PC-3 (cell line): ENCODE measurements at regions of chr20 and their contacts with region 1.

Region 1: DNA sequence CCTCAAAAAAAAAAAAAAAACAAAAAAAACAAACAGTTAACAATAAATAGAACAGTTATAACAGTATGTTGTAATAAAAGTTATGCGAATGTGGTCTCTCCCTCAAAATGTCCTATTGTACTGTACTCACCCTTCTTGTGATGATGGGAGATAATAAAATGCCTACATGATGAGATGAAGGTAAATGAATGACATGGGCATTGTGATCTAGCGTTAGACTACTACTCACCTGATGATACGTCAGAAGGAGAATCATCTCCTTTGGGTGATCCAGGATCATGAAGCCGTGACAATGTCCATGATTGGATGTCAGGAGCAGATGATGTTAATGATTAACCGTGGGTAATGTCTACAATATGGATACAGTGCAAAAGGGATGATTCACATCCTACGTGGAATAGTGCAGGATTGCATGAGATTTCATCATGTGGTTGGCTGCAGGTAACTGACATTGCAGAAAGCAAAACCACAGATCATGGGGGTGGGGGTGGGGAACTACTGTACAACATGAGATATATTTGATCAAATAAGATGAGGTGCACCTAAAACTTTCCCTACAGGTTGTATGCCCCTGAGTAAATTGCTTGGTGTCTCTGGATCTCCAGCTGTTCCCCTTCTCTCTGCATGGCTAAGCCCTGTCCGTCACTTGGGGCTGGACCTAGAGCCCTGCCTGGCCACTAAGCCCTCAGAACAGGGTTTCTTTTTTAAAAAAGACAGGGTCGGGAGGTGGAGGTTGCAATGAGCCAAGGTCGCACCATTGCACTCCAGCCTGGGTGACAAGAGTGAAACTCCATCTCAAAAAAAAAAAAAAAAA is 6.2 kb upstream of the RBCK1 start:
- DNase-seq: peak; percentile 99
- ATAC-seq: peak; percentile 74
- H3K4me3 ChIP-seq: no peak overlapping the region
- H3K27ac ChIP-seq: peak overlapping the region; percentile 91
- H3K4me1 ChIP-seq: peaks cover 27% of the 10 kb centered on the region
- H3K27me3 ChIP-seq: no peaks in the 10 kb centered on the region
- CTCF ChIP-seq: no peak

Region 2: GRCh38 chr20:362271-363254 is 39.3 kb before region 1 on chr20:
- CTCF ChIA-PET with region 1: no interaction called
- POLR2A ChIA-PET with region 1: interaction called, 3 read pairs
- intact Hi-C with region 1: loop called (anchors 5 kb)
- DNase-seq: peak; percentile 99
- ATAC-seq: peak; percentile 67
- H3K4me3 ChIP-seq: no peak overlapping the region
- H3K27ac ChIP-seq: peak overlapping the region; percentile 86
- H3K4me1 ChIP-seq: peaks cover 52% of the 10 kb centered on the region
- H3K27me3 ChIP-seq: no peaks in the 10 kb centered on the region
- CTCF ChIP-seq: peak; percentile 86

Region 3: DNA sequence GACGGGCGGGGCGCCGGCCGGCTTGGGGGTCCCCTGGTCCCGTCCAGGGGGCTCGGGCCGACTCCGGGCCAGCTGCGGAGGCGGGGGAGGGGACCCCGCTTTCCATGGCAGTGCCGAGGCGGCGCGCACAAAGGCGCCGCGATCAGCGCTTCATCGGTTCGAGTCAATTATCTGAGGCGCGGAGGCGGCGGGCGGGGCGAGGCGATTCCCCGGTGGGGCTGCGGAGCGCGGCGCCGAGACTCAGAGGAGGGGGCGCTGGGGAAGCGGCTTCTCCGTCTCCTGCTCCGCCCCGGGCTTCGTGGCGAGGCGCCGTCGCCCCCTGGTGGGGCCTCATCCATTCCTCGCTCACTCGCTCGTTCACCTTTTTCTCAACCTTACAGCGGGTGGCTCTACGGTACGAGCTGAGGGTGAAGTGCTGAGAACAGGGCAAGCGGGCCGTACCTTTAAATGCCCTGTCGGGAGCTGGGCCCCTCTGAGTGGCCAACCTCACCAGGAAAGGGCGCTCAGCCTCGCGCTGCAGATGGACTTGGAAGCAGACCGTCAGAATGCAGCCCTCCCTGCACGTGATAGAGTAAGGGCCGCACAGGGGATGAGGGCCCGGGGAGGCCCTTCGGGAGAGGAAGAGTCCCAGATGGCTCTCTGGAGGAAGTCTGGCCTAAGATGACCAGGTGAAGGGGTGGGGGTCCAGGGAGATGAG is 326.5 kb after region 1 on chr20:
- CTCF ChIA-PET with region 1: interaction called, 11 read pairs
- POLR2A ChIA-PET with region 1: no interaction called
- intact Hi-C with region 1: no loop called
- DNase-seq: peak; percentile 65
- ATAC-seq: peak; percentile 94
- H3K4me3 ChIP-seq: peak overlapping the region; percentile 62
- H3K27ac ChIP-seq: no peak overlapping the region
- H3K4me1 ChIP-seq: no peaks in the 10 kb centered on the region
- H3K27me3 ChIP-seq: peaks cover 33% of the 10 kb centered on the region
- CTCF ChIP-seq: peak; percentile 79